Activated CD4-positive, alpha-beta T cell treated with anti-CD3 and anti-CD28 coated beads, Interleukin-2, amount 10 ng/mL, durations not matched to agents 24 days and 14 days (primary cell): ENCODE measurements at regions of chr3 and their contacts with region 1.

Region 1: DNA sequence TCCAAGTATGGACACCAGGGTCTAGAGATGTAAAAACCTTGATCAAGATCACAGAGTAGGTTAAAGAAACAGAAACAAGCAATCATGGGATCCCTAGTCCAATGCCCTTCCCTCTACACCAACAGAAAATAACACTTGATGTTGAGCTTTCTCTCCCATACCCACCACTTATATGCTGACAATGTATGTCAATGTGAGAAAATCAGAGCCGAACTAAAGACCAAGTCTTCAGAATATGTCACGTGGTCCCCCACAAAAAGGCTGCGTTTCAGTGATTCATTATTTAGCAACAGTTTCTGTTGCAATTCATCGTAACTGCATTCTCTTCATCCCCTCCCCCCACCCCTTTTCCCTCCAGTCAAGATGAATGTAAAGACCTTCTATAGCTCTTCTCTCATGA is 278.9 kb upstream of the STT3B start:
- DNase-seq: no peak
- H3K4me3 Mint-ChIP-seq: peak overlapping the region; percentile 61
- H3K27ac Mint-ChIP-seq: peak overlapping the region; percentile 93
- H3K4me1 Mint-ChIP-seq: peaks cover 51% of the 10 kb centered on the region
- H3K27me3 Mint-ChIP-seq: no peaks in the 10 kb centered on the region

Region 2: DNA sequence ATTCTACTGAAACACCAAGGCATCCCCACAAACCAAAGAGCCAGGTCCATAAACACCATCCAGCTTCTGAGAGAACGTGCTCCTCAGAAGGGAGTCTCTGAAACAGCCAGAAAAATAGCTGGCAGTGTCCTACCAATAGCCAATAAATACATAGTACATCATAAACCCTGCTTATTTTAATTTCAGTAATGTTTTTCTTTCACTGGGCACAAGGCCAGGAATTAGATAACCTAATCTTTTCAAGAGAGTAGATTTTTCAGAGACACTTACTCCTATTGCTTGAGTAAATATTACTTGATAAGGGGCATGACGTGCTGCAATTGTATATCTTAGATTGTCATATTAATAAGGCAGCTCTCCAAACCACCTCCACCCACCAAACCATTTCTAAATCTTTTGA is 382.1 kb before region 1 on chr3:
- intact Hi-C with region 1: no loop called
- DNase-seq: no peak
- H3K4me3 Mint-ChIP-seq: no peak overlapping the region
- H3K27ac Mint-ChIP-seq: no peak overlapping the region
- H3K4me1 Mint-ChIP-seq: no peaks in the 10 kb centered on the region
- H3K27me3 Mint-ChIP-seq: peaks cover 17% of the 10 kb centered on the region

Region 3: GRCh38 chr3:31105438-31106077 is 148.2 kb before region 1 on chr3:
- intact Hi-C with region 1: loop called (anchors 2 kb)
- DNase-seq: peak; percentile 66
- H3K4me3 Mint-ChIP-seq: no peak overlapping the region
- H3K27ac Mint-ChIP-seq: no peak overlapping the region
- H3K4me1 Mint-ChIP-seq: peaks cover 39% of the 10 kb centered on the region
- H3K27me3 Mint-ChIP-seq: no peaks in the 10 kb centered on the region

Region 4: GRCh38 chr3:31157046-31157693 is 96.6 kb before region 1 on chr3:
- intact Hi-C with region 1: no loop called
- DNase-seq: no peak
- H3K4me3 Mint-ChIP-seq: peak overlapping the region; percentile 39
- H3K27ac Mint-ChIP-seq: no peak overlapping the region
- H3K4me1 Mint-ChIP-seq: peaks cover 5% of the 10 kb centered on the region
- H3K27me3 Mint-ChIP-seq: no peaks in the 10 kb centered on the region

Region 5: GRCh38 chr3:31213869-31214486 is 39.8 kb before region 1 on chr3:
- intact Hi-C with region 1: loop called (anchors 1 kb)
- DNase-seq: peak; percentile 86
- H3K4me3 Mint-ChIP-seq: peak overlapping the region; percentile 71
- H3K27ac Mint-ChIP-seq: peak overlapping the region; percentile 75
- H3K4me1 Mint-ChIP-seq: peaks cover 71% of the 10 kb centered on the region
- H3K27me3 Mint-ChIP-seq: no peaks in the 10 kb centered on the region

Region 6: GRCh38 chr3:31242026-31242960 is 11.5 kb before region 1 on chr3:
- intact Hi-C with region 1: loop called (anchors 1 kb)
- DNase-seq: no peak
- H3K4me3 Mint-ChIP-seq: no peak overlapping the region
- H3K27ac Mint-ChIP-seq: peak overlapping the region; percentile 7
- H3K4me1 Mint-ChIP-seq: peaks cover 24% of the 10 kb centered on the region
- H3K27me3 Mint-ChIP-seq: no peaks in the 10 kb centered on the region

Region 7: GRCh38 chr3:31472479-31473390 is 219.0 kb after region 1 on chr3:
- intact Hi-C with region 1: loop called (anchors 2 kb)
- DNase-seq: peak; percentile 70
- H3K4me3 Mint-ChIP-seq: no peak overlapping the region
- H3K27ac Mint-ChIP-seq: peak overlapping the region; percentile 9
- H3K4me1 Mint-ChIP-seq: peaks cover 13% of the 10 kb centered on the region
- H3K27me3 Mint-ChIP-seq: peaks cover 17% of the 10 kb centered on the region